Right ventricle myocardium inferior (tissue), 1 donor: ENCODE measurements at regions of chr3 and their contacts with region 1.

Region 1: GRCh38 chr3:139302084-139302800 is 41.6 kb upstream of the MRPS22 start:
- DNase-seq: no peak
- ATAC-seq: peak; percentile 93

Region 2: GRCh38 chr3:139074565-139075115 is 227.6 kb before region 1 on chr3:
- intact Hi-C with region 1: no loop called
- DNase-seq: no peak
- ATAC-seq: no peak

Region 3: GRCh38 chr3:139227165-139227564 is 75.1 kb before region 1 on chr3:
- intact Hi-C with region 1: loop called (anchors 10 kb)
- DNase-seq: no peak
- ATAC-seq: peak; percentile 82

Region 4: DNA sequence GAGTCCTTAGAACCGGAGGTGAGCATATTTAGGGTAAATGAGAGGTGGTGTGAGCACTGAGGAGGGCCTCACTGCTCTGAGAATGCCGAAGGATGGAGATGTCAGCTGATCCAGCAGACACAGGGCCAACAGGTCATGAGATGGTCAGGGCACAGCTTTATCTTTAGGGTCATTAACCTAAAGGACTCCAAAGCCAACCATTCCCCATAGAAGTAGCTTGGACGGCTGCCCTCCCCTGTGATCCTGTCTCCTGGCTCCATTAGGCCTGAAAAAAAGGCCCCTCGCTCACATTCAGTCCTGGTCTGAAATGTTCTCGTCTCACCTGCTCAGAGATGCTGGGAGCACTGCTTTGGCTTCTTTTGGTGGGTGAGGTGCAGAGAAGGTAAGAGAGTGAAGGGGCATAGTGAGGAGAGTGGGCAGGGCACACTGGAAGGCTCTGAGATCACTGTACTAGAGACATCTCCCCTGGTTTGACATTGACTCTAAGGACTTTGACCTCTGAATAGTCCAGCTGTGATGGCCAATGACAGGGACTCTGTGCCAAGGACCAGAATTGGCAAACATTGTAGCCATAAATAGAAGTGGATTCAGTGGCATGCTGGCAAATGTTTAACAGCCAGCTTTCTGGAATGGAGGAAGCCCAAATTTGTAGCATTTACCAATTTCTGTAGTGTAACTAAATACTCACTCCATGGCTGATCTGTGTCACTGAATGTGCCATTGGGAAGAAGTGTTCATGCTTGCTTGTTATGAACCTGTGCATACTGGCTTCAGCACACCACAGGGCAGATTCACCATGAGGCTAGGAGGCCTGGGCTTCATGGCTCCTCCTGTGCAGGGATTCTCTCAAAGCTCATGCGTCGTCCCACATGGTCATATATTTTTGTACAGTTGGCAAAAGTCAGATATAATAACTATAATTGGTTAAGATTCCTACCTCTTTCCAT is 34.7 kb before region 1 on chr3:
- intact Hi-C with region 1: loop called (anchors 5 kb)
- DNase-seq: no peak
- ATAC-seq: peak; percentile 74

Region 5: GRCh38 chr3:139339219-139339906 is 37.1 kb after region 1 on chr3:
- intact Hi-C with region 1: no loop called
- DNase-seq: no peak
- ATAC-seq: no peak

Region 6: GRCh38 chr3:139552632-139553365 is 250.6 kb after region 1 on chr3:
- intact Hi-C with region 1: no loop called
- DNase-seq: no peak
- ATAC-seq: no peak